Natural killer cell (primary cell): ENCODE measurements at regions of chr1 and their contacts with region 1.

Region 1: DNA sequence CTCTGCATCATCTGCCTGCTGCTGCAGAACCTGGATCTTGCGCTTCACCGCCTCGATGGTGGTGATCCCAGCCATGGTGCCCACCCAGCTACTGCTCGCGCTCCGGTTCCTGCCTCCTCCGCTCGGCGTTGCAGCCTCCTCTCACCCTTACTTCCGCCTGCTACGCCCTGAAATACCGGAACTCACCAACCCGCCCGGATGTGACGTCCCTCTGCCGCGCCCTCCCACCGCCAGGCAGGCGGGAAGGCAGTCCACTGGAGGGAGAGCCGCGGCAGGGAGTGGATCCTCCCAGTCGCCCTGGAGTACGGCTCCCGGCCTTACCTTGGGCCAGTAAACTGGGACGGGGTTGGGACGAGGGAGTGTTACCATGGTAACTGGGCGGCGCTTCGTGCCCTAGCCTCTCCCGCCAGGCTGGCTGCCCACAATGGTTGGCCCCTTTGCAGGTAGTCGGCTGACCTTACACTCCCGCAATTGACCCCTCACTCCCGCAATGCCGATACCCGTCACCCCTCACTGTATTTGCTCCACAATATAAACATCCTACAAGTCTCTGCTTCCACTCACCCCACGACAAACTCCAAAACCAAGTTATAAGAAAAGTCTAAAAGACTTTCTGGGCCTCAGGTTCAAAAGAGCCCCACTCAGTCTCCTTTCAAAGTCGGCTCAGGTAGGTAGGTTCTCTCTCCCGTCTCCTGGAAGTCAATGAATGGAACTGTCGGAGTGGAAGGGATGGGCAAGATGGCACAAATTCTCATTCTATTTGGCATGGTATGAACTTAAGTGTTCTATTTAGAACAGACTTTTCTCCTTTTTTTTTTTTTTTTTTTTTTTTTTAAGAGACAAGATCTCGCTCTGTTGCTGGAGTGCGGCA is 8.6 kb downstream of the TPM3 start:
- DNase-seq: peak; percentile 91 to 96
- ATAC-seq: peak; percentile 89 to 92 (median 92)
- H3K4me3 ChIP-seq: peak overlapping the region; percentile 88
- H3K4me3 Mint-ChIP-seq: peak overlapping the region; percentile 100
- H3K27ac ChIP-seq: peak overlapping the region; percentile 92
- H3K27ac Mint-ChIP-seq: peak overlapping the region; percentile 92 to 97
- H3K4me1 ChIP-seq: peaks cover 45% of the 10 kb centered on the region
- H3K4me1 Mint-ChIP-seq: peaks cover 51 to 52% of the 10 kb centered on the region in 2 donors
- H3K27me3 ChIP-seq: no peaks in the 10 kb centered on the region
- H3K27me3 Mint-ChIP-seq: peaks cover 0 to 7% of the 10 kb centered on the region in 2 donors
- CTCF ChIP-seq: no peak

Region 2: GRCh38 chr1:154075746-154076145 is 107.5 kb before region 1 on chr1:
- intact Hi-C with region 1: no loop called
- DNase-seq: no peak
- ATAC-seq: no peak
- H3K4me3 ChIP-seq: no peak overlapping the region
- H3K4me3 Mint-ChIP-seq: no peak overlapping the region
- H3K27ac ChIP-seq: no peak overlapping the region
- H3K27ac Mint-ChIP-seq: no peak overlapping the region
- H3K4me1 ChIP-seq: no peaks in the 10 kb centered on the region
- H3K4me1 Mint-ChIP-seq: no peaks in the 10 kb centered on the region
- H3K27me3 ChIP-seq: peaks cover 3% of the 10 kb centered on the region
- H3K27me3 Mint-ChIP-seq: peaks cover 9% of the 10 kb centered on the region in 2 donors
- CTCF ChIP-seq: no peak

Region 3: DNA sequence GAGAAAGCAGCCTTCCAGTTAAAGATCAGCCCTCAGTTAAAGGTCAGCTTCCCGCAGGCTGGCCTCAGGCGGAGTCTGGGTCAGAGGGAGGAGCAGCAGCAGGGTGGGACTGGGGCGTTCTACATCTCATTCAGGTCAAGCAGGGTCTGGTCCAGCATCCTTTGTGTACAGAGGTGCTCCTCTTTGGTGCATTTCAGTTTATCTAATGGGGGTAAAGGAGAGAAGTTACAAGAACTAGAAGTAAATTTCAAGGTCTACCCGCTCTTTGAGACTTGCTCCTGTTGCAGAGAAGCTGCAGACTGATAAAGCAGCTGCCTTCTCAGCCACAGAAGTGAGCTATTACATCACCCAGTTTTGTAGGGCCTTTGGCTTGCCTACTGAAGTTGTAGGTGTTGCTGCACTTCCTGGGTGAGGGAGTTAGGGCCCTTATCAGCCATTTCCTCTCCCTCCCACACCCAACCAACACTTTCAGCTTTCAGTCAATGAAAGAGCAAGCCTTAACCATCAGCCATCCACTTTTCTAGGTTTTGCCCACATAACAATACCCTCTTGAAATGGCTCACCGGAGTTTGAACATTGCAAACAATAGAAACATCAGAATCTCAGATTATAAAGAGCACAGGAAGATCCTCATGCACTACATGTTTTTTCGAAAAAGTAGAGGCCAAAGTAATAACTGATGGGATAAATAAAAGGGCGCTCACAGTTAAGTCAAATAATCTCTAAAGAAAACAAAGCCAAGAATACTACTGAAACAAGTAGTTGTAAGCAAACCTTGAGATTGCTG is 25.6 kb before region 1 on chr1:
- intact Hi-C with region 1: loop called (anchors 2 kb)
- DNase-seq: peak; percentile 45 to 91
- ATAC-seq: peak; percentile 98 to 99 (median 99)
- H3K4me3 ChIP-seq: no peak overlapping the region
- H3K4me3 Mint-ChIP-seq: peak overlapping the region; percentile 89
- H3K27ac ChIP-seq: peak overlapping the region; percentile 73
- H3K27ac Mint-ChIP-seq: peak overlapping the region; percentile 93 to 98
- H3K4me1 ChIP-seq: peaks cover 27% of the 10 kb centered on the region
- H3K4me1 Mint-ChIP-seq: peaks cover 45 to 51% of the 10 kb centered on the region in 2 donors
- H3K27me3 ChIP-seq: no peaks in the 10 kb centered on the region
- H3K27me3 Mint-ChIP-seq: no peaks in the 10 kb centered on the region
- CTCF ChIP-seq: no peak

Region 4: GRCh38 chr1:155227261-155228095 is 1044.2 kb after region 1 on chr1:
- intact Hi-C with region 1: no loop called
- DNase-seq: peak; percentile 95 to 98
- ATAC-seq: peak; percentile 94 to 99 (median 95)
- H3K4me3 ChIP-seq: peak overlapping the region; percentile 79
- H3K4me3 Mint-ChIP-seq: peak overlapping the region; percentile 86
- H3K27ac ChIP-seq: peak overlapping the region; percentile 86
- H3K27ac Mint-ChIP-seq: peak overlapping the region; percentile 85 to 96
- H3K4me1 ChIP-seq: peaks cover 26% of the 10 kb centered on the region
- H3K4me1 Mint-ChIP-seq: peaks cover 12 to 17% of the 10 kb centered on the region in 2 donors
- H3K27me3 ChIP-seq: no peaks in the 10 kb centered on the region
- H3K27me3 Mint-ChIP-seq: no peaks in the 10 kb centered on the region
- CTCF ChIP-seq: no peak

Region 5: DNA sequence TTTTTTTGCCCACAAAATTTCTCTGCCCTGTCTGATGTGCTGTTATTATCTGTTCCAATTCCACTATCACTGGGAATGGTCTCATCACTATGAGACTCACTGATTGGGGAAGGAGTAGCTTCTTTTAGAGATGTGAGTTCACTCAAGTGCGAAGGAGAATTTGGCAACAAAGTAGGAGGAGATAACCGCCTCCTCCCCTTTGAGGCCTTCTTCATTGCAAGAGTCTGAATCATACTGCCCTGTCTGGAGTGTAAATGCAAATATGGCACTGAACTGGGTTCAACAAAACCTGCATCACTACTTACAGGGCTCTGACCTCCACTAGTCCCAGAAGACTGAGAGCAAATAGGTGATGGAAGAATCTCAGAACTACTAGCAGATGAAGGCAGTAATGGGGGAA is 1295.9 kb after region 1 on chr1:
- intact Hi-C with region 1: no loop called
- DNase-seq: no peak
- ATAC-seq: no peak
- H3K4me3 ChIP-seq: no peak overlapping the region
- H3K4me3 Mint-ChIP-seq: no peak overlapping the region
- H3K27ac ChIP-seq: no peak overlapping the region
- H3K27ac Mint-ChIP-seq: peak overlapping the region in 1 of 2 donors; percentile 71
- H3K4me1 ChIP-seq: no peaks in the 10 kb centered on the region
- H3K4me1 Mint-ChIP-seq: peaks cover 25 to 37% of the 10 kb centered on the region in 2 donors
- H3K27me3 ChIP-seq: no peaks in the 10 kb centered on the region
- H3K27me3 Mint-ChIP-seq: no peaks in the 10 kb centered on the region
- CTCF ChIP-seq: no peak